ENCODE measurements at regions of chr10 and their contacts with region 1.

Region 1: DNA sequence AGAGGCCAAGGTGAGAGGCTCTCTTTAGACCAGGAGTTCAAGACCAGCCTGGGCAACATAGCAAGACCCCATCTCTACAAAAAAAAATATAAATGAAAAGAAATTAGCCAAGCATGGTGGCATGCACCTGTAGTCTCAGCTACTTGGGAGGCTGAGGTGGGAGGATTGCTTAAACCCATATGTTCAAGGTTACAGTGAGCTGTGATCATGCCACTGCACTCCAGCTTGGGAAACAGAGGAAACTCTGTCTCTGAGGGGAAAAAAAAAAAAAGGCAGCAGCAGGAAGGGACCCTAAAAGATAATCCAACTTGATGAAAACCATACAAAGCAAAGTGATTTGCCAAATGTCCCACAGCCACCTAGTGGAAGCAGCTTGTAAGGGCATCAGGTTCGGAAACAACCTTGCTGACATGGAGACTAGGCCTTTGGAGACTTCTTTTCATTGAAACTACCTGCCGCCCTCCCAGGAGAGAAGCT is 15.6 kb upstream of the PBLD start:
- DNase-seq: peak; percentile 47
- CTCF ChIP-seq: peak; percentile 59

Region 2: GRCh38 chr10:68332259-68333057 is 15.8 kb before region 1 on chr10 and contains the start of gene PBLD:
- CTCF ChIA-PET with region 1: interaction called, 14 read pairs
- POLR2A ChIA-PET with region 1: interaction called, 3 read pairs
- DNase-seq: peak; percentile 43
- CTCF ChIP-seq: peak; percentile 57

Region 3: DNA sequence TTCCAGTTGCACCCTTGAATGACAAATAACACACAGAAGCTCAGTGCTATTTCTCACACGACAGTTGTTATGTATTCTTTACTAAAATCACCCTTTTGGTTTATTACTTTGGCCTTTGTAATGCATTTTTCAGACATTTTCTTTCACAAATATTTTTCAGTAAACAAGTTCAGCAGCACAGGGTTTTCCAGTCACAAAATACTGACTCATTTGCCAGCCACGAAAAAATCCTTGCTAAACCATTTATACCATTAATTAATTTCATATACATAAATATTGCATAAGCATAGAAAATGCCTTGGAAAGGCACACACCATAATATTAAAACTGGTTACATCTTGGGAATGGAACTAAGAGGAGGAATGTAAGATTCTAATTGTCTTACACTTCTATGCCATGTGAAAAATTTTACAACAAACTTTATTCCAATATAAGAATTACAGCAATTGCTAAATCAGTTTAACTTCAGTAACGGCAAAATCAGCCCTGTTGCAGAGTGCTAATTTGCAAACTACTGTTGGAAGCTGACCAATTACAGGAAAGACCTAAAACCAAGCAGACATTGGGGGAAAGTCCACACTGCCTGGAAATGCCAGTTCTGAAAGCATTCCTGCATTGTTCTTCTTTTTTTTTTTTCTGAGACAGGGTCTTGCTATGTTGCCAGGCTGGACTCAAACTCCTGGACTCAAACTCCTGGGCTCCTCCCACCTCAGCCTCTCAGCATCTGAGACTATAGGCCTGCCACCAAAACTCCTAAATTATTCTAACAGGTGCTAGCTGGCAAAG is 16.0 kb after region 1 on chr10:
- CTCF ChIA-PET with region 1: interaction called, 26 read pairs
- POLR2A ChIA-PET with region 1: no interaction called
- DNase-seq: no peak
- CTCF ChIP-seq: no peak

Measured in GM10248 (cell line).